HepG2 (cell line): ENCODE measurements at regions of chr7 and their contacts with region 1.

Region 1: GRCh38 chr7:100081535-100082102 is at the start of gene ZNF3:
- DNase-seq: peak; percentile 98
- ATAC-seq: peak; percentile 85
- H3K4me3 ChIP-seq: peak within 1 kb of the TSS; percentile 91 to 99 (median 92)
- H3K27ac ChIP-seq: peak within 1 kb of the TSS; percentile 96
- H3K4me1 ChIP-seq: peaks cover 44% of the 10 kb centered on the region
- H3K27me3 ChIP-seq: no peaks in the 10 kb centered on the region; a peak in 1 of 5 replicates
- CTCF ChIP-seq: peak; percentile 98
- EP300 ChIP-seq: peak in 1 of 2 experiments; percentile 46; a peak in 2 of 4 replicates
- POLR2A ChIP-seq: peak; percentile 87 to 91
- RAD21 ChIP-seq: peak; percentile 90
- total RNA-seq, gene ZNF3: 53.2 and 56.9 TPM in 2 replicates

Region 2: DNA sequence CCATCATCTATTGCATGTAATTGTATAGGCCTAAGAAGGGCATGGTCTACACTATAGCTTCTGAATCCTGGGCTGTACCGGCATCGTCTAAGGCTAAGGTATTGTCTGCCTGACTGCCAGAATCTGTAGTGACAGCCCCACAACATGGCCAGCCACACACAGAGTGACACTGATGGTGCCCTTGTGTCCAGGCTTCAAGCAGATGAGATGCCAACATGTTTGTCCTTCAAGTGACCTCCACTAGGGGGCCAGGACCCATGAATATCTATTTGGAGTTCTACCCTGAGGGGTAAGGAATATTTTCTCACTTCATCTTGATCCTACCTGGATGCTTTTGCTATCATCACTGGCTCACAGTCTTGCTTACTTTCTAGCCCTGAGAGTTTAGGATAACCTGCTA is 348.2 kb before region 1 on chr7:
- CTCF ChIA-PET with region 1: no interaction called
- POLR2A ChIA-PET with region 1: no interaction called
- in situ Hi-C with region 1: no loop called
- intact Hi-C with region 1: no loop called
- DNase-seq: peak; percentile 42
- ATAC-seq: peak; percentile 49
- H3K4me3 ChIP-seq: no peak overlapping the region
- H3K27ac ChIP-seq: peak overlapping the region; percentile 50
- H3K4me1 ChIP-seq: peaks cover 81% of the 10 kb centered on the region
- H3K27me3 ChIP-seq: no peaks in the 10 kb centered on the region
- CTCF ChIP-seq: peak; percentile 63
- EP300 ChIP-seq: no peak
- POLR2A ChIP-seq: no peak
- RAD21 ChIP-seq: no peak

Region 3: GRCh38 chr7:100003711-100004661 is 77.6 kb before region 1 on chr7:
- CTCF ChIA-PET with region 1: no interaction called
- POLR2A ChIA-PET with region 1: interaction called, 13 read pairs
- in situ Hi-C with region 1: no loop called
- intact Hi-C with region 1: no loop called
- DNase-seq: peak; percentile 99
- ATAC-seq: peak; percentile 96
- H3K4me3 ChIP-seq: peak overlapping the region in 1 of 3 experiments; percentile 12; a peak in 1 of 6 replicates
- H3K27ac ChIP-seq: peak overlapping the region; percentile 96
- H3K4me1 ChIP-seq: peaks cover 97% of the 10 kb centered on the region
- H3K27me3 ChIP-seq: no peaks in the 10 kb centered on the region
- CTCF ChIP-seq: peak; percentile 35; the same call in 1 of the 2 replicates
- EP300 ChIP-seq: peak; percentile 74 to 98; a peak in 3 of 4 replicates
- POLR2A ChIP-seq: 0 out of 4 replicates have a peak, but pooled peaks of 1 of the 2 experiments have one; percentile 18
- RAD21 ChIP-seq: peak; percentile 75

Region 4: GRCh38 chr7:100065452-100066186 is 16.0 kb before region 1 on chr7:
- CTCF ChIA-PET with region 1: no interaction called
- POLR2A ChIA-PET with region 1: interaction called, 10 read pairs
- in situ Hi-C with region 1: no loop called
- intact Hi-C with region 1: no loop called
- DNase-seq: no peak
- ATAC-seq: peak; percentile 22
- H3K4me3 ChIP-seq: no peak overlapping the region
- H3K27ac ChIP-seq: no peak overlapping the region
- H3K4me1 ChIP-seq: peaks cover 14% of the 10 kb centered on the region
- H3K27me3 ChIP-seq: no peaks in the 10 kb centered on the region
- CTCF ChIP-seq: no peak
- EP300 ChIP-seq: no peak
- POLR2A ChIP-seq: peak in 1 of 2 experiments; percentile 32; a peak in 1 of 4 replicates
- RAD21 ChIP-seq: no peak

Region 5: GRCh38 chr7:100126931-100127865 is 45.6 kb after region 1 on chr7 and contains the start of gene MBLAC1:
- CTCF ChIA-PET with region 1: no interaction called
- POLR2A ChIA-PET with region 1: interaction called, 3 read pairs
- in situ Hi-C with region 1: no loop called
- intact Hi-C with region 1: loop called (anchors 5 kb)
- DNase-seq: peak; percentile 79
- ATAC-seq: peak; percentile 56
- H3K4me3 ChIP-seq: peak within 1 kb of the TSS; percentile 74 to 92 (median 84)
- H3K27ac ChIP-seq: peak within 1 kb of the TSS; percentile 96
- H3K4me1 ChIP-seq: peaks cover 55% of the 10 kb centered on the region
- H3K27me3 ChIP-seq: no peaks in the 10 kb centered on the region
- CTCF ChIP-seq: 0 out of 2 replicates have a peak, but pooled peaks have one; percentile 7
- EP300 ChIP-seq: no peak
- POLR2A ChIP-seq: peak in 1 of 2 experiments; percentile 78; a peak in 2 of 4 replicates
- RAD21 ChIP-seq: no peak
- total RNA-seq, gene MBLAC1: 1.8 and 2.1 TPM in 2 replicates